ENCODE measurements at regions of chr5 and their contacts with region 1.

Region 1: DNA sequence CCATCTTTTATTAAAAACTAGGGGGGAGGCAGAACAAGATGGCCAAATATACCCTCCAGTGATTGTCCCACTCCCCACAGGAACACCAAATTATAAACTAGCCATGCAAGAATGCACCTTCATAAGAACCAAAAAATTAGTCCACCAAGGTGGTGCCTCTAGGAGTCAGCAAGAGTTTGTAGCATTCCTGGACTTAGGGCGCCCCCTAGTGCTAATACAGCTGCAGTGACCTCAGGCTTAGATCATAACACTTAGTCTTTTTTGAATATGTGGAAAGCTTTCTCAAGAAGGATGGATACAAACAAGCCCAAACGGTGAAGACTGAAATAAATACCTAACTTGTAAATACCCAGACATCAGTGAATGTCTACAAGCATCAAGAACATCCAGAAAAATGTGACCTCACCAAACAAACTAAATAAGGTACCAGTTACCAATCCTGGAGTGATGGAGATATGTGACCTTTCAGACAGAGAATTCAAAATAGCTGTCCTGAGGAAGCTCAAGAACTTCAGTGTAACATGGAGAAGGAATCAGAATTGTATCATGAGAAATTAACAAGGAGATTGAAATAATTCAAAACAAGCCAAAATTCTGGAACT is 19.3 kb downstream of the PPIP5K2 start:
- DNase-seq: peak; percentile 91
- ATAC-seq: peak; percentile 100
- H3K4me3 ChIP-seq: no peak overlapping the region
- H3K27ac ChIP-seq: no peak overlapping the region
- H3K4me1 ChIP-seq: no peaks in the 10 kb centered on the region
- H3K27me3 ChIP-seq: no peaks in the 10 kb centered on the region
- CTCF ChIP-seq: peak; percentile 100

Region 2: DNA sequence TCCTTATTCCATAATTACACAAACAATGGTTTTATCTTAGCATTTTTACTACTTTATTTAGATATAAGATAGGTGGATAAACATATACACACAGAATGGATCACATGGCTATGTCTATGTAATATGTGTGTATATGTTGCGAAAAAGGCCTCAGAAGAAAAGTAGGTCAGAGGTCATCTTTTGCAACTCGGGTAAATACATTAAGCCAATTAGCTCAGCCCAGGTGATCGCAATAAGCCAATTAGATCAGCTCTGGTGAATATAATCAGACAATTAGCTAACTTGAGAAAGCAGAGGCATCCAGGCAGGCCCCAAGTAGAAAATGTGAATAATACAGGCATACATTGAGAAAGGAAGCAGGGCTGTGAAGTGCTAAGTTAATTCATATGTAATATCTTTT is 867.6 kb before region 1 on chr5:
- CTCF ChIA-PET with region 1: interaction called, 11 read pairs
- POLR2A ChIA-PET with region 1: no interaction called
- intact Hi-C with region 1: no loop called
- DNase-seq: no peak
- ATAC-seq: no peak
- H3K4me3 ChIP-seq: no peak overlapping the region
- H3K27ac ChIP-seq: no peak overlapping the region
- H3K4me1 ChIP-seq: no peaks in the 10 kb centered on the region
- H3K27me3 ChIP-seq: peaks cover 22% of the 10 kb centered on the region
- CTCF ChIP-seq: no peak

Region 3: DNA sequence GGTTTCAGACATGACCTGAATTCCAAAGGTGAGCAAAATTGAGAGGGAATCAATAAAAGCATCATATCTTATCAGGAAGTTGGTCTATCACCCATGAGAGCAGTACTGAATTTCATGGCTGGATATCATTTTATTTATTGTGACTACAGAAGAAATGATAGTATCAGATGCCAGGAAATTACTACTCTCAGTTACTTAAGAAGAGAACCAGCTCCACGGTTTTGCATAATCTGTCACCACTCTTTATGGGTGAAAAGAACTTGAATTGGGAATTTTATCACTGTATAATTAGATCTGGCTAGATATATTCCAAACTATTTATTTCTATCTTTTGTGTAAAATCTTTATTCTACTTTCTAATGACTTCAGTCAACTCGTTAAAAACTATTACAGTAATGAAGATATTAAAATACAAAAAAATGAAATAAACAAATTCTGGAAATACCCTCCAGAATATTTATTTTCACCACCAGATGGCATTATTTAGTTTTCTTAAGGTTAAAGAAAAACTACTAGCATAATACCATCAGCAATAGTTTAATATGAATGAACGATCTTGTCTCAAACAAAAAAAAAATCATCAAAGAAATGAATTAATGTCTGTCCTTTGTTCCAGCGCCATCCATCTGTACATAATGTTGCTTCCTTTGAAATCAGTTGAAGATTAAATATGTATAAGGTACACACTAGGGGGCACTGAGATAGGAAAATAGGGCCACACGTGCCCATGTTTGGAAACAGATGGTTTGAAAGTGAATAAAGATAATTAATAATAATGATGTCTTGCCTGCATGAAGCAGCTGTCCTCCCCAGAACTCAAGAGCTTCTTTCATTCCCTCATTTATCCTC is 555.9 kb before region 1 on chr5:
- CTCF ChIA-PET with region 1: no interaction called
- POLR2A ChIA-PET with region 1: no interaction called
- intact Hi-C with region 1: loop called (anchors 5 kb)
- DNase-seq: peak; percentile 74
- ATAC-seq: peak; percentile 58
- H3K4me3 ChIP-seq: peak overlapping the region; percentile 14; the same call in 1 of the 2 replicates
- H3K27ac ChIP-seq: no peak overlapping the region
- H3K4me1 ChIP-seq: peaks cover 6% of the 10 kb centered on the region; the same call in 1 of the 2 replicates
- H3K27me3 ChIP-seq: no peaks in the 10 kb centered on the region
- CTCF ChIP-seq: peak; percentile 98

Region 4: GRCh38 chr5:102971697-102972293 is 167.6 kb before region 1 on chr5:
- CTCF ChIA-PET with region 1: no interaction called
- POLR2A ChIA-PET with region 1: no interaction called
- intact Hi-C with region 1: loop called (anchors 1 kb)
- DNase-seq: peak; percentile 70
- ATAC-seq: peak; percentile 82
- H3K4me3 ChIP-seq: no peak overlapping the region
- H3K27ac ChIP-seq: no peak overlapping the region
- H3K4me1 ChIP-seq: peaks cover 6% of the 10 kb centered on the region; the same call in 1 of the 2 replicates
- H3K27me3 ChIP-seq: no peaks in the 10 kb centered on the region
- CTCF ChIP-seq: peak; percentile 86

Region 5: GRCh38 chr5:103066326-103066725 is 73.0 kb before region 1 on chr5:
- CTCF ChIA-PET with region 1: no interaction called
- POLR2A ChIA-PET with region 1: no interaction called
- intact Hi-C with region 1: loop called (anchors 2 kb)
- DNase-seq: no peak
- ATAC-seq: no peak
- H3K4me3 ChIP-seq: no peak overlapping the region
- H3K27ac ChIP-seq: no peak overlapping the region
- H3K4me1 ChIP-seq: no peaks in the 10 kb centered on the region
- H3K27me3 ChIP-seq: no peaks in the 10 kb centered on the region
- CTCF ChIP-seq: no peak

Region 6: GRCh38 chr5:103793595-103794182 is 654.3 kb after region 1 on chr5:
- CTCF ChIA-PET with region 1: no interaction called
- POLR2A ChIA-PET with region 1: no interaction called
- intact Hi-C with region 1: no loop called
- DNase-seq: no peak
- ATAC-seq: no peak
- H3K4me3 ChIP-seq: no peak overlapping the region
- H3K27ac ChIP-seq: no peak overlapping the region
- H3K4me1 ChIP-seq: no peaks in the 10 kb centered on the region
- H3K27me3 ChIP-seq: no peaks in the 10 kb centered on the region
- CTCF ChIP-seq: no peak

Measured in PC-3 (cell line).